ENCODE measurements at regions of chr2 and their contacts with region 1.

Region 1: DNA sequence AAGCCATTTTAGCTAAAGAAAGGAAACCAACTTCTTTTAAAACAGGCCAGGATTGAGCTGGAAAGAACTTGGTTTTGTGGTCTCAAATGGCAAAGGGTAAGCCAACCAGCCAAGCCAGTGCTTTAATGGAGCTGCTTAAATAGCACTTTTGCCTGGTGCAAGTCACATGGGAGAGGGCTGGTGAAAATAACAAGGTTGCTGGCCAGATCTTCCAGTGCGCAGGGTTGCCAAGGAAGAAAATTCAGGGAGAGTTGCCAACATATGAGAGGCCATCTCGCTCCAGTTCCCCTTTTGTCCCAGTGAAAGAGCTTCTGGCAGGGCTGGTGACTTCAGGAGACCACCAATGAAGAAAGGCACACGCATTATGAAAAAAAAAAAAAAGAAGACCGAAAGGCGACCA is 57.3 kb downstream of the IRS1 start:
- DNase-seq: peak; percentile 85
- H3K4me3 ChIP-seq: no peak overlapping the region
- H3K27ac ChIP-seq: peak overlapping the region; percentile 56 to 77 (median 76)
- H3K4me1 ChIP-seq: peaks cover 0 to 71% (median 54%) of the 10 kb centered on the region in 4 donors
- H3K27me3 ChIP-seq: no peaks in the 10 kb centered on the region
- CTCF ChIP-seq: no peak
- EP300 ChIP-seq: no peak
- POLR2A ChIP-seq: no peak

Region 2: DNA sequence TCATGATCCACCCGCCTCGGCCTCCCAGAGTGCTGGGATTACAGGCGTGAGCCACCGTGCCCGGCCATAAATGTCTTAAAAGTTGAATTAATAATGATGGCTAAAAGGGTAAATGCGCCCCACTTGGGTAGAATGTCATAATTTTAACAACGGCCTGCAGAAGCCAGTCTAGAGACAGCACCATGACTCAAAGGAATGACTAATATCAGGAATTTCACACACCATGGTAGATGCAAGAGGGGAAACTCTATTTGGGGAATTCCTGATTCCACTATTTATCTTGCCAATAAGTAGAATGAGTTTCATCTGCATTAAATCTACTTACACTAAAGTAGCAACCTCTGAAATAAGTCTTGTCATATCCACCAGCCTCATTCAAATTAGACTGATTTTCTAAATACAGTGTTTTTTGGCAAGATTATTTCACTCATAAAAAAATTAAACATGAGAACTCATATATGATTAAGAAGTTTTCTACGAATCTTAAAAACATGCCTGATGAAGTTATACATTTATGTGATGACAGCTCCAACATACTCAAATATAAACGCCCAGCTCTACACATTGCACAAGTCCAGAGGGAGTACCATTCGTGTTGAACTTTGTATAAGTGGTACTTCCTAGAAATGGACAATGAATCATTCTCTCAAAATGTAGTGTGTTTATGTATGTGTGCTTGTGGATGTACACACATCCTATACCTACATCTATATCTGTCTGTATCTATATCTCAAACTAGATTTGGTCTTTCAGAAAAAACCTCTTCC is 252.4 kb before region 1 on chr2:
- intact Hi-C with region 1: no loop called
- DNase-seq: no peak
- H3K4me3 ChIP-seq: no peak overlapping the region
- H3K27ac ChIP-seq: no peak overlapping the region
- H3K4me1 ChIP-seq: peaks cover 0 to 7% (median 0%) of the 10 kb centered on the region in 4 donors
- H3K27me3 ChIP-seq: no peaks in the 10 kb centered on the region
- CTCF ChIP-seq: no peak
- EP300 ChIP-seq: no peak
- POLR2A ChIP-seq: no peak

Region 3: DNA sequence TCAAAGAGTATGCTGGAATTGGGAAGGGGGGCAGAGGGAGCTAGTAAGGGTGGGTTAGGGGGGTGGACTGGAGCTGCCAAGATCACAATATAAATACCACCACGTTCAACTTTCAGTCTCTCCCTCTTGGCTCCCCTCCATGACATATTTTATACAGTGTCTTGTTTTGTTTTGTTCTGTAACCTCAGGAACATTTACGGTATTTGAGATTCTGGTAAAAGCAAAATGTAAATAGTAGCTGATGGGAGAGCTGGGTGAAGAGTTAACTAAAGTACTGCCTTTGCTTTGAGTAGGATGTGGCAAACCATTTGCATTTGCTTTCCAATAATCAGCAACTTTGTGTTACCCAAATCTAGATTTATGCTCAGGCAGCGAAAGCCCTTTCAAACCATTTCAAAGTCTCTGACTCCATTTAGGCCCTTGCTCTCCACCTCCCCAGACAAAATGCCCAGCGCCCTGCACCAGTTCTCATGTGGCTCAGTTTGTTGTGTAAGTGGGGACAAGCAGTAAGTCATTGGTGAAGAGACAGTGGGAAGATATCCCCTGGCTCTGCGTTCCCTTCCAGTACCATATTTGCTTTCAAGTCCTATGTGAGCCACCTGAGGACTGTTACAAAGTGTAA is 39.9 kb after region 1 on chr2:
- intact Hi-C with region 1: loop called (anchors 5 kb)
- DNase-seq: no peak
- H3K4me3 ChIP-seq: no peak overlapping the region
- H3K27ac ChIP-seq: peak overlapping the region; percentile 60 to 80 (median 74)
- H3K4me1 ChIP-seq: peaks cover 0 to 43% (median 34%) of the 10 kb centered on the region in 4 donors
- H3K27me3 ChIP-seq: no peaks in the 10 kb centered on the region
- CTCF ChIP-seq: no peak
- EP300 ChIP-seq: no peak
- POLR2A ChIP-seq: no peak

Measured in sigmoid colon (tissue), 7 donors.